Colonic mucosa (tissue), 4 donors: ENCODE measurements at regions of chr10 and their contacts with region 1.

Region 1: GRCh38 chr10:88386821-88387773 is 196.0 kb downstream of the RNLS start:
- DNase-seq: peak; percentile 64
- H3K4me3 ChIP-seq: no peak overlapping the region
- H3K27ac ChIP-seq: peak overlapping the region; percentile 81
- H3K4me1 ChIP-seq: peaks cover 7% of the 10 kb centered on the region
- H3K27me3 ChIP-seq: no peaks in the 10 kb centered on the region
- CTCF ChIP-seq: no peak

Region 2: DNA sequence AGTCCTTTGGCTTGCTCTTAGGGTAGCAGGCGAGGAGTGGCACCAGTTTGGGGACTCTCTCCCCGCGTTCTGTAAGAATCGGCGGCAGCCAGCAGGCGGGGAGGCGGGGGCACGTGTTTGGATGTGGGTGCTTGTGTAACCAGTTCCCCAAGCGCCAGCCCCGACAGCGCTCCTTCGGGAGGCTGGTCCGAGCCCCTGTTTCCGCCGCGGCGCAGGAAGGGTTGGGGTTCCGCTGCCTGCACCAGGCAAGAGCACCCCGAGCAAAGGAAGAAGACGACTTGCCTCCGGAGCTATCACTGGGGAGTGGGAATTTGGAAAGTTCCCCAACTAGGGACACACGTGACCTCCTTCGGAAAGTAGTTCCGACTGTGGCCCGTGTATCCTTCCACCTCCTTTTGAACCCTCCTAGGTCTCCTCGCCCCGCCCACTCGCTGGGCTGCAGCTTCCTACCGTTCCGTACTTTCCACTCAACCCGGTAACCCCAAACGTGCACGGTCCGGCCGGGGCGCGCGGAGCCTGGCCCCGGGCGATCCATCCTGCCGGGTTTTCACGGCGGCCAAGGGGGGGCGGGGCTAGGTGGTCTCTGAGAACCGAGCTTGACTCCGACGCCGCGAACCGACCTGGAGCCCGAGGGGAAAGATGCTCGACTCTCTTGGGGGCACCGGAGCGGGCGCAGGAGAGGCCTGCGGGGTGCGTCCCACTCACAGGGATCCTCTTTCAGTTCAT is 525.0 kb before region 1 on chr10:
- intact Hi-C with region 1: loop called (anchors 5 kb)
- DNase-seq: peak; percentile 98
- H3K4me3 ChIP-seq: peak overlapping the region; percentile 77
- H3K27ac ChIP-seq: peak overlapping the region; percentile 96
- H3K4me1 ChIP-seq: no peaks in the 10 kb centered on the region
- H3K27me3 ChIP-seq: no peaks in the 10 kb centered on the region
- CTCF ChIP-seq: no peak

Region 3: GRCh38 chr10:87925570-87925969 is 461.5 kb before region 1 on chr10:
- intact Hi-C with region 1: no loop called
- DNase-seq: no peak
- H3K4me3 ChIP-seq: no peak overlapping the region
- H3K27ac ChIP-seq: no peak overlapping the region
- H3K4me1 ChIP-seq: no peaks in the 10 kb centered on the region
- H3K27me3 ChIP-seq: no peaks in the 10 kb centered on the region
- CTCF ChIP-seq: no peak

Region 4: DNA sequence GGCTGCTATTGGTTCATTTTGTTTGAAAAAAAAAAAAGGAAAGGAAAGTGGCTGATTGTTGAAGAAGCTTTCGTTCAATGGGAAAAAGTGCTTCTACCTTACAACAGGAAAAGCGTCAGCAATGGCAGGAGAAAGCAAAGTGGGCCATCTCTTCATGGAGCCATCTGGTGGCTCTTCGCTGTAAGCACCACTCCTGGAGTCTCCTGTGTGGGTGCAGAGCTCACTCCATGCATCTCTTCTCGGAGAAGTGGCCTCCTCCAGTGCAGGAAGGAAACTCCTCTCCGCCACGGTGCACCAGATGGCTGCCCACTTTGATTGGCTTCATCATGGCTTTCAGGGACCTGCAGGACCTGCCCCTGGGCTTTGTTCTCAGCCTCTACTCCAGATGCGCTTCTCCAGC is 272.7 kb before region 1 on chr10:
- intact Hi-C with region 1: loop called (anchors 10 kb)
- DNase-seq: no peak
- H3K4me3 ChIP-seq: no peak overlapping the region
- H3K27ac ChIP-seq: no peak overlapping the region
- H3K4me1 ChIP-seq: no peaks in the 10 kb centered on the region
- H3K27me3 ChIP-seq: no peaks in the 10 kb centered on the region
- CTCF ChIP-seq: peak; percentile 37

Region 5: GRCh38 chr10:88236121-88236743 is 150.9 kb before region 1 on chr10:
- intact Hi-C with region 1: loop called (anchors 5 kb)
- DNase-seq: peak; percentile 64
- H3K4me3 ChIP-seq: no peak overlapping the region
- H3K27ac ChIP-seq: peak overlapping the region; percentile 4
- H3K4me1 ChIP-seq: no peaks in the 10 kb centered on the region
- H3K27me3 ChIP-seq: no peaks in the 10 kb centered on the region
- CTCF ChIP-seq: no peak

Region 6: GRCh38 chr10:88330174-88330573 is 56.9 kb before region 1 on chr10:
- intact Hi-C with region 1: no loop called
- DNase-seq: no peak
- H3K4me3 ChIP-seq: no peak overlapping the region
- H3K27ac ChIP-seq: no peak overlapping the region
- H3K4me1 ChIP-seq: no peaks in the 10 kb centered on the region
- H3K27me3 ChIP-seq: no peaks in the 10 kb centered on the region
- CTCF ChIP-seq: no peak